Heart right ventricle (tissue), 16 donors: ENCODE measurements at regions of chr11 and their contacts with region 1.

Region 1: DNA sequence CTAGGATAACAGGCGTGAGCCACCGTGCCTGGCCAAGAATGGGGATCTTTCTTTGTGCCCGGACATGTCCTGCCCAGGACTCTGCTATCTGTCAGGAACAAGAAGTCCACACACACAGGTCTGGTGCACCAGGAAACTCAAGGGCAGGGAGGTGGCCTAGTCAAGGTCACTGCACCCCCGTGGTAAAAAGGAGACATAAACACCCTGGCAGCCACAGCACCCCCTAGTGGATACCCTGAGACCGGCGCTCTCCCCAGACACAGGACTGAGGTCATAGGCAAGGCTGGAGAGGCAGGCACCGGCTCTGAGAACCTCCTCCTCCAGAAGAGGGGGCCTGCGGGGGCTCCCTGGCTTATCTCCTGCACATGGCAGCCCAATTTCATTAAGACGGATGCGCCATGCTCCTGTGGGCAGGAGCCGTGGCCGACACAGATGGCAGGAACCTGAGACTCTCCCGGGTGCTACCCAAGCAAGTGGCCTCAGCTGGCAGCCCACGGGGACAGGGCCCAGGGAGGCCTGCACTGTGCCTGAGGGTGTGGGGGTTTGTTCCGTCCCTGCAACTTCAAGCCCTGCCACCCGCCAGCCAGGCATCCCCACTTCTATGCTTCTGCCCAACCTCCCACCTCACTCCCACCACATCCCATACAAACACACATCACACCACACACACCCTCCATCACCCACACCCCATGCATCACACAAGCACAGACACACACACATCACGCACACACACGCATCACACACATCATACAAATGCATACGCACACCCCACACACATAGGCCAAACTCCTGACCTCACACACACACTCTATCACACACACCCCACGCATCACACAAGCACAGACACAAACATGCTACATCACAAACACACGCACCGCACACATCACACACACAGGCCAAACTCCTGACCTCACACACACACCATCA is 19.6 kb downstream of the MACROD1 start:
- DNase-seq: peak in 1 of 2 donors; percentile 44
- ATAC-seq: peak in 1 of 8 donors; percentile 3
- H3K4me3 ChIP-seq: no peak overlapping the region
- H3K27ac ChIP-seq: peak overlapping the region in 2 of 10 donors; percentile 13 to 28
- H3K4me1 ChIP-seq: peaks cover 8 to 43% (median 33%) of the 10 kb centered on the region in 9 donors
- H3K27me3 ChIP-seq: no peaks in the 10 kb centered on the region
- CTCF ChIP-seq: peak; percentile 27 to 76 (median 54)

Region 2: DNA sequence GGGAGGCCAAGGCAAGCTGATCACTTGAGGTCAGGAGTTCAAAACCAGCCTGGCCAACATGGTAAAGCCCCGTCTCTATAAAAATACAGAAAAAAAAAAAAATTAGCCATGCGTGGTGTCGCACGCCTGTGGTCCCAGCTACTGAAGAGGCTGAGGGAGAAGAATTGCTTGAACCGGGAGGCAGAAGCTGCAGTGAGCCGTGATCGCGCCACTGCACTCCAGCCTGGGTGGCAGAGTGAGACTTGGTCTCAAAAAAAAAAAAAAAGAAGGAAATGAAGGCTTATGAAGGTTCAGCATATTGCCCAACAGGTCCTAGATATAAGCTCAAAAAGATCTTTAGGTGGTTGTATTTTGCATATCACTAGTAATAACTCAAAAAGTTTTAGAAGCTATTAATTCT is 485.3 kb before region 1 on chr11:
- intact Hi-C with region 1: no loop called
- DNase-seq: no peak
- ATAC-seq: no peak
- H3K4me3 ChIP-seq: no peak overlapping the region
- H3K27ac ChIP-seq: no peak overlapping the region
- H3K4me1 ChIP-seq: peaks cover 0 to 38% (median 15%) of the 10 kb centered on the region in 9 donors
- H3K27me3 ChIP-seq: no peaks in the 10 kb centered on the region
- CTCF ChIP-seq: no peak

Region 3: DNA sequence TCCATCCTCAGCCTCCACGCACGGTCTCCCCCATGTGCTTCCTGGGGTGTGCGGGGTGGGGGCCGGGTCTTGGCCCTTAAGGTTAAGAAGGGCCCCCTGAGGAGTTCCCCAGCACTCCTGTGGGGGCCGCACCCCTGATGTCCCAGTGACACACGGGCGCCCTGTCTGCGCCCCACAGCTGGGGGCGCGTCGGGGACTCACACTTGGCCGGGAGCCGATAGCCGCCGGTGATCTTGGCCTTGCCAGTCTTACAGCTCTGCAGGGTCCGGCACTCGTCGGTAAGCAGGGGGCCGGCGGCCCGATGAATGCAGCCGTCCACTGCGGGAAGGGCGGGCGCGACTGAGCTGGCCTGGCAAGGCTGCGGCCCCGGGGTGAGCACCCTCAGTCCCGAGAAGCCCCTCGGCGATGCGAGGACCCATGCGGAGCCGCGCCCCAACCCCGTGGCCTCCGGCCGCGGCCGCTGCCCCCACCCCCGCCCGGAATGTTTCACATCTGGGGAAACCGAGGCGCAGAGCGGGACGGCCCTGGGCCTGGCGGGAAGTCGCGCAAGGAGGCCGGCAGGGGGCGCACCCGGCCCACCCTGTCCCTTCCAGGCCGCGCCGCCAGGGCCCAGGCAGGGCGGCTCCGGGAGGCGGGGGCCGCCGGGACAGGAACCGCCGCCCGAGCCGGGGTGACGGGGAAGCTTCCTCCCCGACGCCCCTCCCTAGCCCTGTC is 146.1 kb before region 1 on chr11:
- intact Hi-C with region 1: loop called in 9 of 10 experiments (anchors 1 to 2 kb)
- DNase-seq: peak; percentile 63 to 77
- ATAC-seq: peak; percentile 72 to 93 (median 88)
- H3K4me3 ChIP-seq: peak overlapping the region in 9 of 10 donors; percentile 30 to 53 (median 49)
- H3K27ac ChIP-seq: peak overlapping the region in 2 of 10 donors; percentile 14 to 27
- H3K4me1 ChIP-seq: peaks cover 23 to 55% (median 38%) of the 10 kb centered on the region in 9 donors
- H3K27me3 ChIP-seq: peaks cover 0 to 54% (median 0%) of the 10 kb centered on the region in 7 donors
- CTCF ChIP-seq: peak; percentile 70 to 91 (median 83)